Activated T-helper 1 cell treated with anti-CD3 and anti-CD28 coated beads, Interleukin-12 subunit alpha, Interleukin-12 subunit beta, Interleukin-2, Interleukin-4 antibody, amounts not matched to agents 30 ng/mL and 10 ng/mL and 1 ng/mL, durations not matched to agents 14 hours and 24 hours and 36 hours (primary cell): ENCODE measurements at regions of chr3 and their contacts with region 1.

Region 1: GRCh38 chr3:134485718-134486576 is at the starts of genes ANAPC13 and CEP63:
- DNase-seq: peak; percentile 87
- H3K4me3 Mint-ChIP-seq: peak within 1 kb of the TSS; percentile 92
- H3K27ac Mint-ChIP-seq: peak within 1 kb of the TSS; percentile 100
- H3K4me1 Mint-ChIP-seq: peaks cover 47% of the 10 kb centered on the region
- H3K27me3 Mint-ChIP-seq: peaks cover 3% of the 10 kb centered on the region
- total RNA-seq, gene ANAPC13: 25.2 and 26.8 TPM in 2 replicates
- total RNA-seq, gene CEP63: 20.0 and 22.2 TPM in 2 replicates

Region 2: GRCh38 chr3:133448478-133449122 is 1037.3 kb before region 1 on chr3:
- intact Hi-C with region 1: loop called (anchors 10 kb)
- DNase-seq: peak; percentile 22
- H3K4me3 Mint-ChIP-seq: peak overlapping the region; percentile 34
- H3K27ac Mint-ChIP-seq: peak overlapping the region; percentile 80
- H3K4me1 Mint-ChIP-seq: peaks cover 34% of the 10 kb centered on the region
- H3K27me3 Mint-ChIP-seq: peaks cover 2% of the 10 kb centered on the region

Region 3: GRCh38 chr3:133805527-133806475 is 680.1 kb before region 1 on chr3 and contains the start of gene SRPRB:
- intact Hi-C with region 1: loop called (anchors 2 kb)
- DNase-seq: peak; percentile 95
- H3K4me3 Mint-ChIP-seq: peak within 1 kb of the TSS; percentile 99
- H3K27ac Mint-ChIP-seq: peak within 1 kb of the TSS; percentile 95
- H3K4me1 Mint-ChIP-seq: peaks cover 28% of the 10 kb centered on the region
- H3K27me3 Mint-ChIP-seq: peaks cover 7% of the 10 kb centered on the region
- total RNA-seq, gene SRPRB: 108 and 115 TPM in 2 replicates

Region 4: GRCh38 chr3:134299185-134299887 is 186.6 kb before region 1 on chr3:
- intact Hi-C with region 1: loop called (anchors 1 kb)
- DNase-seq: no peak
- H3K4me3 Mint-ChIP-seq: no peak overlapping the region
- H3K27ac Mint-ChIP-seq: no peak overlapping the region
- H3K4me1 Mint-ChIP-seq: no peaks in the 10 kb centered on the region
- H3K27me3 Mint-ChIP-seq: peaks cover 55% of the 10 kb centered on the region

Region 5: GRCh38 chr3:134803051-134803505 is 317.1 kb after region 1 on chr3:
- intact Hi-C with region 1: loop called (anchors 5 kb)
- DNase-seq: peak; percentile 55
- H3K4me3 Mint-ChIP-seq: peak overlapping the region; percentile 46
- H3K27ac Mint-ChIP-seq: peak overlapping the region; percentile 79
- H3K4me1 Mint-ChIP-seq: peaks cover 81% of the 10 kb centered on the region
- H3K27me3 Mint-ChIP-seq: peaks cover 28% of the 10 kb centered on the region